ENCODE measurements at regions of chr22 and their contacts with region 1.

Region 1: GRCh38 chr22:37566903-37567820 is 6.9 kb downstream of the CDC42EP1 start:
- DNase-seq: peak; percentile 70 to 93 (median 82)
- ATAC-seq: peak; percentile 94
- H3K4me3 ChIP-seq: peak overlapping the region; percentile 28
- H3K4me3 Mint-ChIP-seq: peak overlapping the region; percentile 61 to 85 (median 72)
- H3K27ac ChIP-seq: no peak overlapping the region
- H3K27ac Mint-ChIP-seq: peak overlapping the region in 3 of 9 donors; percentile 26 to 70 (median 62)
- H3K4me1 ChIP-seq: peaks cover 20 to 22% of the 10 kb centered on the region in 2 donors
- H3K4me1 Mint-ChIP-seq: peaks cover 16 to 35% (median 25%) of the 10 kb centered on the region in 7 donors
- H3K27me3 ChIP-seq: peaks cover under 1 to 4% of the 10 kb centered on the region in 2 donors
- H3K27me3 Mint-ChIP-seq: peaks cover 4 to 44% (median 12%) of the 10 kb centered on the region in 5 donors

Region 2: DNA sequence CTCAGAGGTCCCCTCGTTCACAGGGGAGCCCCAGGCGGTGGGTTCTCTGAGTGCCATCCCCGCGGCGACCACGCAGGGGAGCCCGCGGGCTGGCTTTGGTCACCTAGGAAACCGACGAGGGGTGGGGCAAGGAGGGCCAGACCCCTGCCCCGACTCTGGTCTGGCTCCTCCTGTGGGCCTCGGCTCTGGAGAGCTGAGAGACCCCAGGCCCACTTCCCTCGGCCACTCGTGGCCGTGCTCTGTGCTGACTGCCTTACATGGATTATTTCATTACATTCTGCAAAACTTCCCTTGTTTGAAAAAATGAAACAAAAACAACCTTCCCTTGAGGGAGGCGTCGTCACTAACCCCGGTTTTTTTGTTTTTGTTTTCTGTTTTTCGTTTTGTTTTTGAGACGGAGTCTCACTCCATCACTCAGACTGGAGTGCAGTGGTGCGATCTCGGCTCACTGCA is 300.0 kb before region 1 on chr22:
- CTCF ChIA-PET with region 1: interaction called, 16 read pairs
- POLR2A ChIA-PET with region 1: no interaction called
- intact Hi-C with region 1: loop called in 1 of 2 experiments (anchors 1 kb)
- DNase-seq: peak; percentile 58 to 84 (median 73)
- ATAC-seq: peak; percentile 92
- H3K4me3 ChIP-seq: peak overlapping the region; percentile 76
- H3K4me3 Mint-ChIP-seq: peak overlapping the region; percentile 84 to 93 (median 88)
- H3K27ac ChIP-seq: peak overlapping the region; percentile 87
- H3K27ac Mint-ChIP-seq: peak overlapping the region; percentile 91 to 99 (median 95)
- H3K4me1 ChIP-seq: peaks cover 0 to 13% of the 10 kb centered on the region in 2 donors
- H3K4me1 Mint-ChIP-seq: peaks cover 30 to 48% (median 38%) of the 10 kb centered on the region in 7 donors
- H3K27me3 ChIP-seq: no peaks in the 10 kb centered on the region
- H3K27me3 Mint-ChIP-seq: peaks cover 0 to 14% (median 0%) of the 10 kb centered on the region in 5 donors

Region 3: GRCh38 chr22:37472418-37473006 is 94.7 kb before region 1 on chr22:
- CTCF ChIA-PET with region 1: interaction called, 10 read pairs
- POLR2A ChIA-PET with region 1: no interaction called
- intact Hi-C with region 1: loop called in 1 of 2 experiments (anchors 1 kb)
- DNase-seq: peak in 7 of 9 donors; percentile 34 to 54 (median 38)
- ATAC-seq: peak; percentile 60
- H3K4me3 ChIP-seq: no peak overlapping the region
- H3K4me3 Mint-ChIP-seq: no peak overlapping the region
- H3K27ac ChIP-seq: no peak overlapping the region
- H3K27ac Mint-ChIP-seq: peak overlapping the region in 5 of 9 donors; percentile 11 to 87 (median 51)
- H3K4me1 ChIP-seq: no peaks in the 10 kb centered on the region
- H3K4me1 Mint-ChIP-seq: peaks cover 13 to 24% (median 15%) of the 10 kb centered on the region in 7 donors
- H3K27me3 ChIP-seq: no peaks in the 10 kb centered on the region
- H3K27me3 Mint-ChIP-seq: no peaks in the 10 kb centered on the region

Region 4: GRCh38 chr22:37538590-37539357 is 28.4 kb before region 1 on chr22:
- CTCF ChIA-PET with region 1: interaction called, 147 read pairs
- POLR2A ChIA-PET with region 1: interaction called, 26 read pairs
- intact Hi-C with region 1: loop called (anchors 1 kb)
- DNase-seq: peak; percentile 78 to 90 (median 87)
- ATAC-seq: peak; percentile 99
- H3K4me3 ChIP-seq: no peak overlapping the region
- H3K4me3 Mint-ChIP-seq: peak overlapping the region; percentile 15 to 64 (median 48)
- H3K27ac ChIP-seq: no peak overlapping the region
- H3K27ac Mint-ChIP-seq: peak overlapping the region in 5 of 9 donors; percentile 1 to 37 (median 7)
- H3K4me1 ChIP-seq: peaks cover 8 to 14% of the 10 kb centered on the region in 2 donors
- H3K4me1 Mint-ChIP-seq: peaks cover 14 to 44% (median 17%) of the 10 kb centered on the region in 7 donors
- H3K27me3 ChIP-seq: peaks cover 0 to 4% of the 10 kb centered on the region in 2 donors
- H3K27me3 Mint-ChIP-seq: peaks cover 4 to 18% (median 12%) of the 10 kb centered on the region in 5 donors

Region 5: DNA sequence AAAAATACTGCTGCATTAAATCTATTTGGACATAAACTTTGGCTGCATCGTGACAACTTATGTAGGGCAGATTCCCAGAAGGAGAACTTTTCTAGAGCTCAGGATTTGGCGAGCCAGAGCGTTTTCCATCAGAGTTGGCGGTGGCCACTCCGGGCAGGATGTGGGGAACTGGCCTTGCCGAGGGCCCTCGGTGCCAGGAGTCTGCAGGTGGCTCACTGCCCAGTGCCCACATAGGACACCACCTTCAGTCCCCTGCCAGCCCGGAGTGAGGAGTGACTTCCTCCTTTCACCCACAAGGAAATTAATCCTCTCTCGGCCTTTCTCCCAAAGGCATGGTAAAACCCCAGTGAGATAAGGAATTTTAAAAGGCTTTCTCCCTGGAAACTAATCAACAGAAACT is 14.3 kb after region 1 on chr22:
- CTCF ChIA-PET with region 1: interaction called, 15 read pairs
- POLR2A ChIA-PET with region 1: interaction called, 3 read pairs
- intact Hi-C with region 1: no loop called
- DNase-seq: no peak
- ATAC-seq: no peak
- H3K4me3 ChIP-seq: no peak overlapping the region
- H3K4me3 Mint-ChIP-seq: peak overlapping the region in 2 of 10 donors; percentile 25 to 47
- H3K27ac ChIP-seq: no peak overlapping the region
- H3K27ac Mint-ChIP-seq: no peak overlapping the region
- H3K4me1 ChIP-seq: peaks cover 2 to 7% of the 10 kb centered on the region in 2 donors
- H3K4me1 Mint-ChIP-seq: peaks cover 11 to 28% (median 20%) of the 10 kb centered on the region in 7 donors
- H3K27me3 ChIP-seq: no peaks in the 10 kb centered on the region
- H3K27me3 Mint-ChIP-seq: peaks cover 0 to 22% (median 0%) of the 10 kb centered on the region in 5 donors

Region 6: GRCh38 chr22:37594237-37594636 is 27.1 kb after region 1 on chr22:
- CTCF ChIA-PET with region 1: interaction called, 56 read pairs
- POLR2A ChIA-PET with region 1: interaction called, 26 read pairs
- intact Hi-C with region 1: loop called (anchors 1 to 2 kb)
- DNase-seq: no peak
- ATAC-seq: no peak
- H3K4me3 ChIP-seq: no peak overlapping the region
- H3K4me3 Mint-ChIP-seq: no peak overlapping the region
- H3K27ac ChIP-seq: no peak overlapping the region
- H3K27ac Mint-ChIP-seq: no peak overlapping the region
- H3K4me1 ChIP-seq: peaks cover 0 to 5% of the 10 kb centered on the region in 2 donors
- H3K4me1 Mint-ChIP-seq: peaks cover 11 to 14% (median 12%) of the 10 kb centered on the region in 7 donors
- H3K27me3 ChIP-seq: no peaks in the 10 kb centered on the region
- H3K27me3 Mint-ChIP-seq: peaks cover 0 to 8% (median 0%) of the 10 kb centered on the region in 5 donors

Region 7: DNA sequence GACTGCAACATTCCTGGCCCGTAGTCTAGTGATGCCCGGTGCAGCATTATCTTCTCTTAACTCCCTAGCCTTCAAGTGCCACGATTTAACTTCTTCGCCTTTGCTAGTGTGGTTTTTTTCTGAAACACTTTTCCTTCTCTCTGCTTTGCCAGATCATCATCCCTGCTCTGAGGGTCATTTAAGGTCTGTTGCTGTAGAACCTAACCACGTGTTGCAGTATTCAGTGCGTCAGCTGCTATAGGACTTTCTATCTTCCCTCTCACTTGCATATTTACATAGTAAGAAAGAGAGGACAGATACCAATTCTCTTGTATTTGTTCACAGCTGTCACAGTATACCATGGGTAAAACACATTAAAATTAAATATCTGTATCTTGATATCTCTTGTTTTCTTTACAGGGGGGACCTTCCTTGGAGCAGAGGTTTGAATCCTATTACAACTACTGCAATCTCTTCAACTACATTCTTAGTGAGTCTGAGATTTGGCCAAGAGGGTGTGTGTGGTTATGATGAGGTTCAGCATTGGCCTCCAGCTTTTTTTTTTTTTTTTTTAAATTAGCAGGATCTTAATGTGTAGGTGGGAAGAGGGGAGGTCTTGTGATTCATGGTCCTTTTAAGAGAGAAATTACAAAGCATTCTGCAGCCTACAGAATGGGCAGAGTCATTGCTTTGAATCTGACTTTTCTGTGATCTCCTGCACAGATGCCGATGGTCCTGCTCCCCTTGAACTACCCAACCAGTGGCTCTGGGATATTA is 295.6 kb after region 1 on chr22:
- CTCF ChIA-PET with region 1: no interaction called
- POLR2A ChIA-PET with region 1: no interaction called
- intact Hi-C with region 1: no loop called
- DNase-seq: no peak
- ATAC-seq: no peak
- H3K4me3 ChIP-seq: no peak overlapping the region
- H3K4me3 Mint-ChIP-seq: no peak overlapping the region
- H3K27ac ChIP-seq: no peak overlapping the region
- H3K27ac Mint-ChIP-seq: peak overlapping the region in 3 of 9 donors; percentile 13 to 82 (median 76)
- H3K4me1 ChIP-seq: peaks cover 0 to 2% of the 10 kb centered on the region in 2 donors
- H3K4me1 Mint-ChIP-seq: peaks cover 5 to 10% (median 6%) of the 10 kb centered on the region in 7 donors
- H3K27me3 ChIP-seq: no peaks in the 10 kb centered on the region
- H3K27me3 Mint-ChIP-seq: no peaks in the 10 kb centered on the region